T-cell (primary cell): ENCODE measurements at regions of chr17 and their contacts with region 1.

Region 1: DNA sequence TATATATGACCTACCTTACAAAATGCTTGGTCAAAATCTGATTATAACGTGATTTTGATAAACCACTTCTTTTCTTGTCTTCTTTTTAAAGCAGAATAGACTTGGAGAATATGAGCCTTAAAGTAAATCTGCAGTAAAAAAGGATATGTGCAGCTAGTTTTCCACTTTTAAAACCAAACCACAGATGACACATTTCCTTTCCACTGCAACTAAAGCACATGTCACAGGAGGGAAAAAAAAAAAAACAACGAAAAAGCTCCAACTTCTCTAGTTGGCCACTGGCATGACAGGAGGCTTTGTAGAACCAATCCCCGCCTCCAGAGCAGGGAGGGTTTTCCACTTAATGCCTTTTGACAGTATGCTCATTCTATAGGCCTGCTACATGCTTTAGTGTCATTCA is at the start of gene EVI2A:
- DNase-seq: peak; percentile 25 to 92 (median 79)
- ATAC-seq: peak; percentile 76 to 92 (median 79)
- H3K4me3 ChIP-seq: peak within 1 kb of the TSS; percentile 66 to 75
- H3K4me3 Mint-ChIP-seq: peak within 1 kb of the TSS; percentile 76 to 89 (median 87)
- H3K27ac ChIP-seq: peak within 1 kb of the TSS; percentile 88
- H3K27ac Mint-ChIP-seq: peak within 1 kb of the TSS; percentile 95
- H3K4me1 ChIP-seq: peaks cover 7 to 20% of the 10 kb centered on the region in 2 experiments
- H3K4me1 Mint-ChIP-seq: peaks cover 27 to 37% (median 34%) of the 10 kb centered on the region in 3 donors
- H3K27me3 ChIP-seq: no peaks in the 10 kb centered on the region
- H3K27me3 Mint-ChIP-seq: no peaks in the 10 kb centered on the region
- total RNA-seq, gene EVI2A: 42.3 to 84.9 (median 80.0) TPM

Region 2: DNA sequence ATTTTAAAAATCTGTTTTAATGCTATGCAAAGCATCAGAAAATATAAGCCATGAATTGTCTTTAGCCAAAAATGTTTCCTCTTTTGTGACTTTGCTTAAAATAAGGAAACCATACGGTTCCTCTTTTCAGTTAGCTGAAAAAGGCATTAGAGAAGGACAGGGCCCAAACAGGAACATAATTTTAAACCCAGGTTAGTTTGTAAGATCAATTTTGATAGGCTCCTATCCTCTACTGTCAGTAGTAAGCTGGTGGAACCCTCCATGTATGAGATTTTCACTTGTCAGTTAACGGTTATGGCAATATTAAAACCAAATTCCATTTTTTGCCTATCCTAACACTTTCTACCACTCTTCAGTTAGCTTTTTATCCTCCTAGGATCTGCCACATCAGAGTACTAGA is 11.9 kb before region 1 on chr17:
- CTCF ChIA-PET with region 1: interaction called in 1 of 2 experiments, 23 read pairs
- POLR2A ChIA-PET with region 1: interaction called, 6 to 17 read pairs
- DNase-seq: peak in 1 of 35 experiments; percentile 60
- ATAC-seq: peak in 1 of 4 experiments; percentile 21
- H3K4me3 ChIP-seq: peak overlapping the region; percentile 67 to 75
- H3K4me3 Mint-ChIP-seq: peak overlapping the region; percentile 77 to 94 (median 88)
- H3K27ac ChIP-seq: peak overlapping the region; percentile 90
- H3K27ac Mint-ChIP-seq: peak overlapping the region; percentile 93 to 94
- H3K4me1 ChIP-seq: peaks cover 19 to 37% of the 10 kb centered on the region in 2 experiments
- H3K4me1 Mint-ChIP-seq: peaks cover 57 to 72% (median 61%) of the 10 kb centered on the region in 3 donors
- H3K27me3 ChIP-seq: no peaks in the 10 kb centered on the region
- H3K27me3 Mint-ChIP-seq: no peaks in the 10 kb centered on the region

Region 3: DNA sequence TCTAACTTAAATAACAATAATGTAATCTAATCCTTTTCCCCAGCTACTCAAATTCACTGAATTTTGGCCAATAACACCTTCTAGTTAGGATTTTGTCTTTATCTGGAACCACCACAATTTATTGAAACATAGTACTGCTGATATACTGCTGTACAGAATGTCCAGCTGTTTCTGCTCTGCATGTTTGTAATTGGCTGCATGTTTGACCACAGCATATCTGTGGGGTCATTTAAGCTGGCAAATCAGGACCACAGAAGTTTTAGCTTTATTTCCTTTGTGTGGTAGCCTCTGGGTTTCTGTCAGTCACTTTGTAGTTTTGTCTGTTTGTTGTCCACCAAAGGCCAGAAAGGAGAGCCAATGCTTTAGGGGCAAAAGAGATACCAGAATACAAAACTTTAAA is 47.8 kb after region 1 on chr17:
- CTCF ChIA-PET with region 1: interaction called in 1 of 2 experiments, 7 read pairs
- POLR2A ChIA-PET with region 1: interaction called in 1 of 2 experiments, 13 read pairs
- DNase-seq: no peak
- ATAC-seq: no peak
- H3K4me3 ChIP-seq: no peak overlapping the region
- H3K4me3 Mint-ChIP-seq: no peak overlapping the region
- H3K27ac ChIP-seq: no peak overlapping the region
- H3K27ac Mint-ChIP-seq: peak overlapping the region in 1 of 2 donors; percentile 19
- H3K4me1 ChIP-seq: peaks cover 0 to 6% of the 10 kb centered on the region in 2 experiments
- H3K4me1 Mint-ChIP-seq: peaks cover 17 to 26% (median 18%) of the 10 kb centered on the region in 3 donors
- H3K27me3 ChIP-seq: no peaks in the 10 kb centered on the region
- H3K27me3 Mint-ChIP-seq: no peaks in the 10 kb centered on the region

Region 4: DNA sequence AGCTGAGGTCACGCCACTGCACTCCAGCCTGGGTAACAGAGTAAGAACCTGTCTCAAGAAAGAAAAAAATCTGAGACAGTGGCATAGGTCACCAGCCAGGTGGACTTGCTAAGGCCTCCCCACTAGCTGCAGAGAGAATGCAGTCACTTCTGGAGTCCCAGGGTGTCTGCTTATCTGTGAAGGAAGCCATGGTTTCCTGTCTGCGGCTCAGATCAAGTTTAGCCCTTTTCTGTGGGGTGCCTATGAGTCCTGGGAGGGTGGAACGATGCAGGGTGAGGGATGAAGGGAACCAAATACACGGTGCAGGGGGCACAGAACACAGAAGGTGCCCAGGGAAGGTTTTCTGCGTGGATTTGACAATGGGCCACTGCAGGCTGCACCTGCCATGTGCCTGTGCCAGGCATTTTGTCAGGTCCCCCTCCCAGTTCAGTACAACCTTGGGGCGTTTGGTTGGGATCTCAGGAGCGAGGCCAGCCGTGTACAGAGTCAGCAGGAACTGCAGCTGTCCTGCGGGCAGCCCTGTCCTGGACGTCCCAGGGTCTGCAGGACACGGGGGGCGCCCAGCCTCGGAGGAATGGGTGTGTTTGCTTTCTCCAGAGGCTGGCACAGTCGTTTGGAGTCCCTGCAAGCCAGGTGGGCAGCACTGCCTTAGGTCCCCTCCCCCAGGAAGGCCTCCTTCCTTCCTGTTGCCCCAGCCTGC is 111.8 kb after region 1 on chr17:
- CTCF ChIA-PET with region 1: no interaction called
- POLR2A ChIA-PET with region 1: no interaction called
- DNase-seq: peak in 31 of 35 experiments; percentile 10 to 68 (median 34)
- ATAC-seq: peak; percentile 87 to 94 (median 93)
- H3K4me3 ChIP-seq: peak overlapping the region in 1 of 2 donors; percentile 5
- H3K4me3 Mint-ChIP-seq: peak overlapping the region in 1 of 3 donors; percentile 46
- H3K27ac ChIP-seq: no peak overlapping the region
- H3K27ac Mint-ChIP-seq: no peak overlapping the region
- H3K4me1 ChIP-seq: peaks cover 6 to 26% of the 10 kb centered on the region in 2 experiments
- H3K4me1 Mint-ChIP-seq: peaks cover 20 to 30% (median 21%) of the 10 kb centered on the region in 3 donors
- H3K27me3 ChIP-seq: peaks cover 0 to 47% of the 10 kb centered on the region in 2 experiments
- H3K27me3 Mint-ChIP-seq: peaks cover 5 to 10% of the 10 kb centered on the region in 2 donors

Region 5: GRCh38 chr17:32222620-32223019 is 901.1 kb after region 1 on chr17:
- CTCF ChIA-PET with region 1: no interaction called
- POLR2A ChIA-PET with region 1: interaction called in 1 of 2 experiments, 11 read pairs
- DNase-seq: no peak
- ATAC-seq: no peak
- H3K4me3 ChIP-seq: no peak overlapping the region
- H3K4me3 Mint-ChIP-seq: no peak overlapping the region
- H3K27ac ChIP-seq: no peak overlapping the region
- H3K27ac Mint-ChIP-seq: no peak overlapping the region
- H3K4me1 ChIP-seq: no peaks in the 10 kb centered on the region
- H3K4me1 Mint-ChIP-seq: peaks cover 0 to 7% (median 1%) of the 10 kb centered on the region in 3 donors
- H3K27me3 ChIP-seq: no peaks in the 10 kb centered on the region
- H3K27me3 Mint-ChIP-seq: no peaks in the 10 kb centered on the region